ENCODE measurements at regions of chr1 and their contacts with region 1.

Region 1: DNA sequence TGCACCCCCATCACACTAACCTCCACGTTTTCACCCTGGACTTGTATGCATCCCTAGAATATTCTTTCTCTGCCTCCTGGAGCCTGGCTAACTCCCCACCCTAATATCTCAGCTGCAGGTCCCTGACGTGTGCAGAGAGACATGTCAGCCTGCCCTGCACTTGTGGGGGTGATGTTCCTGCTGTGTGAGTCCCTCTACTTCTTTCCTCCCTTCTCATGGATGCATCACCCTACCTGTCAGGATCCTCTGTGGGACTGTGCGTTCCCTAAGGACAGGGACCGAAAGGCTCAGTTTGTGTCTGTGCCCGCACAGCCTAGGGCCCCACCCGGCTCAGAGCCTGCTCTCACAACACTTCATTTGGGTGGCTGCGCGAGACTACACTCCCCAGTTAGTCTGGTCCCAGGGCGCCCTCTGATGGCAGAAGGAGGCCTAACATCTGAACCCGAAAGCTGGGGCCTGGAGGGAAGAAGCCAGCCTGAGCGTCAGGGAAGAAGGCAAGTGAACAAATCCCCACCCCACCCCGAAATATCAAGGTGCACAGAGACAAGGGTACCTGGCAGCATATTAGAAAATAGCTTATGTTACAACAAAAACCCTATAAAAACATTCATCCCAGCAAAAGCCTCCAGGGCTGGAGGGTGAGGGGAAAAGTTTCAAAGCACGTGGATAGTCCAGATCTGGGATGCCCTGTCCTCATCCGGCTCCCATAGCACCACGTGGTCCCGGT is 3.7 kb downstream of the CD52 start:
- DNase-seq: peak; percentile 93
- ATAC-seq: peak; percentile 66
- H3K4me3 ChIP-seq: peak overlapping the region in 4 of 5 experiments; percentile 90 to 95 (median 94)
- H3K4me3 Mint-ChIP-seq: peak overlapping the region; percentile 89
- H3K27ac ChIP-seq: peak overlapping the region in 1 of 2 donors; percentile 75
- H3K27ac Mint-ChIP-seq: peak overlapping the region; percentile 99
- H3K4me1 ChIP-seq: peaks cover 43% of the 10 kb centered on the region in 2 donors
- H3K4me1 Mint-ChIP-seq: peaks cover 57% of the 10 kb centered on the region
- H3K27me3 ChIP-seq: no peaks in the 10 kb centered on the region
- H3K27me3 Mint-ChIP-seq: no peaks in the 10 kb centered on the region
- CTCF ChIP-seq: peak; percentile 92

Region 2: DNA sequence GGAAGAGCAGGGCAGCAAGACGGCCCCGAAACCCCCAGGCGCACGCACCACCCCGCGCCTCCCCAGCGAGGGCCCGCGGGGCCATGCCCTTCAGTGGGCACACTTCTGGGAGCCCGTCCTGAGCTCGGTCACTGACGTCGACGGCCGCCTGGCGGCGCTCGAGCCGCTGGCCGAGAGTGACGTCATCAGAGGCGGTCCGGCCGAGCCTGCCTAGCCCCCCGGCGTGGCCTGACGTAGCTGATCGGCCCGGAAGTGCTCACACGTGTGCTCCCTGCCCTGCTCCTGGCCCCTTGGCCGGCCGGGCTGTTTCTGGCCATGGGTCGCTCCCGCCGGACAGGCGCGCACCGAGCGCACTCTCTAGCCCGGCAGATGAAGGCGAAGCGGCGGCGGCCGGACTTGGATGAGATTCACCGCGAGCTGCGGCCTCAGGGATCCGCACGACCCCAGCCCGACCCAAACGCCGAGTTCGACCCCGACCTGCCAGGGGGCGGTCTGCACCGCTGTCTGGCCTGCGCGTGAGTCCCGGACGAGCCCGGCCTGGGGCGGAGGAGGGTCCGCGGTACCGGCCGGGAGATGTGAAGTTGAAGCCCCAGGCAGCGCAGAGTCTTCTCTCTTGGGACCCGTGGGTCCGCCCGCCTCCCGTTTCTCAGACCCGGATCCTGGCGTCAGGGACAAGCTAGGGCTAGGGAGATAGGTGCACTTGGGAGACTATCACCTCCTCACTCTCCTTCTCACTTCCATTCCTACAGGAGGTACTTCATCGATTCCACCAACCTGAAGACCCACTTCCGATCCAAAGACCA is 151.6 kb before region 1 on chr1 and contains the start of gene ZNF593:
- CTCF ChIA-PET with region 1: interaction called, 19 read pairs
- POLR2A ChIA-PET with region 1: no interaction called
- intact Hi-C with region 1: loop called (anchors 1 kb)
- DNase-seq: peak; percentile 92
- ATAC-seq: peak; percentile 97
- H3K4me3 ChIP-seq: peak within 1 kb of the TSS; percentile 58 to 94 (median 86)
- H3K4me3 Mint-ChIP-seq: peak within 1 kb of the TSS; percentile 93
- H3K27ac ChIP-seq: peak within 1 kb of the TSS; percentile 38 to 91
- H3K27ac Mint-ChIP-seq: peak within 1 kb of the TSS; percentile 85
- H3K4me1 ChIP-seq: peaks cover 7 to 15% of the 10 kb centered on the region in 2 donors
- H3K4me1 Mint-ChIP-seq: peaks cover 15% of the 10 kb centered on the region
- H3K27me3 ChIP-seq: no peaks in the 10 kb centered on the region
- H3K27me3 Mint-ChIP-seq: no peaks in the 10 kb centered on the region
- CTCF ChIP-seq: peak; percentile 79
- total RNA-seq, gene ZNF593: 10.7 and 13.5 TPM in 2 replicates

Region 3: DNA sequence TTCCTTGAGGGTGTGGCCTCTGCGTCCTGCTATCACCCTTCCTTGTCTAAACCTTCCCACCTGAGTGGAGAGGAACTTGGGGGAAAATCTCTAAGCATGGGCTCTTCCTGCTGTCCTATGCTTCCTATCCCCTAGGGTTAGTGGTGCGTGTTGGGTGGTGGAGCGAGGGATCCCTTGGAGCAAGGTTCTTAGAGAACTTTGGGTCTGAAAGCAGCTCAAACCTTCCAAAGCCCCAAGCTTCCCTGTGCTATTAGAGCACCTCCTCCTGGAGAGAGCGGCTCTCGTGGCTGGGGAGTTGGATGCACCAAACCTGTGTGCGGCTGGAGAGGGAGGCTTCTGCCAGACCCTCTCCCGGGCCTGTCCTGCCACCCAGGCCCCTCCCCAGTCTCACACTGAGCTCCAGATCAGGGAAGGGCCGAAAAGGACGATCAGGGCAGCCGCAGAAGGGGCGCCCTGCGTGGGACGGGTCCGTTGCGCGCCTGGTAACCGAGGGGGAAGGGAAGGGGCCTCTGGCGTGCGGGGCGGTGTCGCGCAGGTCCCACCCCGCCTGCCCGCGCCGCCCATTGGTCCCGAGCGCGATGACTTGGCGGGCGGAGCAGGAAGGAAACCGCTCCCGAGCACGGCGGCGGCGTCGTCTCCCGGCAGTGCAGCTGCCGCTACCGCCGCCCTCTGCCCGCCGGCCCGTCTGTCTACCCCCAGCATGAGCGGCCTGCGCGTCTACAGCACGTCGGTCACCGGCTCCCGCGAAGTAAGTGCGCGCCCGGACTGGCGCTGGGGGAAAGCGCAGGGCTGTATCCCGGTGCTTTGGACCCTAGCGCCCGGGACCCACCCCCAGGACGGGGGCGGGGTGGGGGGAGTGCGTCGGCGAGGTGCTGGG is 41.8 kb before region 1 on chr1 and contains the start of gene SH3BGRL3:
- CTCF ChIA-PET with region 1: interaction called, 1,400 read pairs
- POLR2A ChIA-PET with region 1: interaction called, 1,239 read pairs
- intact Hi-C with region 1: loop called (anchors 1 kb)
- DNase-seq: peak; percentile 87
- ATAC-seq: peak; percentile 68
- H3K4me3 ChIP-seq: peak within 1 kb of the TSS; percentile 75 to 93 (median 90)
- H3K4me3 Mint-ChIP-seq: peak within 1 kb of the TSS; percentile 92
- H3K27ac ChIP-seq: peak within 1 kb of the TSS; percentile 73 to 81
- H3K27ac Mint-ChIP-seq: peak within 1 kb of the TSS; percentile 91
- H3K4me1 ChIP-seq: peaks cover 55 to 83% of the 10 kb centered on the region in 2 donors
- H3K4me1 Mint-ChIP-seq: peaks cover 74% of the 10 kb centered on the region
- H3K27me3 ChIP-seq: no peaks in the 10 kb centered on the region
- H3K27me3 Mint-ChIP-seq: no peaks in the 10 kb centered on the region
- CTCF ChIP-seq: no peak
- total RNA-seq, gene SH3BGRL3: 230 and 232 TPM in 2 replicates

Region 4: DNA sequence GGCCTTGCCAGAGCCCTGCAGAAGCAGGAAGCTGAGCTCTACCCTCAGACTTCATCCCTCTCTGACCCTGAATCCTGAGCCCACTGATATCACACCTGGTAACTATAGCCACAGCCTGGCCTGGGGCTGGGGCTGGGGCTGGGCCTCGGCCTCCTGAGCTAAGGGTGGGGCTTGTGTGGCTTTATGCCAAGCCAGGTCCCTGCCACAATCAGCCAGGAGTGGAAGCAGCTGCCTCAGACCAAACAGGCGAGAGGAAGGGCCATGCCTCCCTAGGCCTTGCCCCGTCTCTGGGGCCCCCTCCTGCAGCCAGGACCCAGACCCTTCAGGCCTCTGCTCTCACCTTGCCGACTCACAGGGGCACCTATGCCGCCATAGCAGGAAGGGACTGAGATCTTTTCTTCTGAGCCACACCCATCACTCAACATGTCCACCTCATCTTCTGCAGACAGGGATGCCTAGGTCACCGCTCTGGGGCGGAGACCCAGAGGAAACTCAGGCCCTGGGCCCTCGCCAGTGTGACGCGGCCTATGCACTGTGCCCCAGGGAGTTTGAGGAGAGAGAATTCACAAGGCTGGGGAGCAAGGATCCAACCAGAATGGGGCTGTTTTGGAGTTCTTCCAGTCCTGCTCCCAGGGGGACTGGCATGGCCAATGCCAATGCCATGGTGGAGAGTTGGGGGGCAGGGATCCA is 20.7 kb before region 1 on chr1:
- CTCF ChIA-PET with region 1: interaction called, 5 read pairs
- POLR2A ChIA-PET with region 1: interaction called, 47 read pairs
- intact Hi-C with region 1: no loop called
- DNase-seq: no peak
- ATAC-seq: no peak
- H3K4me3 ChIP-seq: no peak overlapping the region
- H3K4me3 Mint-ChIP-seq: no peak overlapping the region
- H3K27ac ChIP-seq: no peak overlapping the region
- H3K27ac Mint-ChIP-seq: peak overlapping the region; percentile 72
- H3K4me1 ChIP-seq: peaks cover 22 to 30% of the 10 kb centered on the region in 2 donors
- H3K4me1 Mint-ChIP-seq: peaks cover 34% of the 10 kb centered on the region
- H3K27me3 ChIP-seq: no peaks in the 10 kb centered on the region
- H3K27me3 Mint-ChIP-seq: no peaks in the 10 kb centered on the region
- CTCF ChIP-seq: no peak

Region 5: DNA sequence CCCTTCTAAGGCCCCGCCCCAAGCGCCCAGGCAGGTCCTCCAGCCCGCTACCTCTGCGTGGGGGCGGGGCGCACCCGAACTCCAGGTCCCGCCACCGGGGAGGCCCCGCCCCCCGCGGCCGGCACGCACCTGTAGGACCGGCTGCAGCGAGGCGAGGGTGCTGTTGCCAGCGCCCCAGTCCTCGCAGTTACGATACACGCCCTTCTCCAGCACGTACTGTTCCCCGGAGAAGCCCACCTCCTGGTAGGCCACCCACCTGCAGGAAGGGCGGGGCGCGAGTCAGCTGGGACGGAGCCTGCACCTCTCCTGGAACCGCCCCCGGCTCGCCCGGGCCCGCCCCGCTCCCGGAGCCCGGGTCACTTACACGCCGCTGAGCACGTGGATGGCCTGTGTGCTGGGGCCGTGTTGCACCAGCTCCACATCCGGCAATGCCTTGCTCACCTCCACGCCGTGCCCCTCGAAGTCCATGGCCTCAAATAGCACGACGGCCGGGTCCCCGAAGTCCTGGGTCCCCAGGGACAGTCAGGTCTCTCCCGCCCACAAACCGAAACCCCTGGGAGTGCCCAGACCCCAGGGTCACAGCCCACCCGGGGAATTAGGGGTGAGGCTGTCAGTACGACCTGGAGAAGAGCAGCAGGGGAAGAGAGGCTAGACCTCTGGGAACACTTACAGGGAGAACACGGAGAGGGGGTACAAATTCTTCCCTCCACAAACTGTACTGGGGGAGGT is 15.2 kb after region 1 on chr1:
- CTCF ChIA-PET with region 1: interaction called, 5 read pairs
- POLR2A ChIA-PET with region 1: interaction called, 4 read pairs
- intact Hi-C with region 1: loop called (anchors 1 kb)
- DNase-seq: peak; percentile 91
- ATAC-seq: peak; percentile 96
- H3K4me3 ChIP-seq: peak overlapping the region in 4 of 5 experiments; percentile 56 to 72 (median 65)
- H3K4me3 Mint-ChIP-seq: peak overlapping the region; percentile 95
- H3K27ac ChIP-seq: no peak overlapping the region
- H3K27ac Mint-ChIP-seq: peak overlapping the region; percentile 61
- H3K4me1 ChIP-seq: peaks cover 8 to 14% of the 10 kb centered on the region in 2 donors
- H3K4me1 Mint-ChIP-seq: peaks cover 13% of the 10 kb centered on the region
- H3K27me3 ChIP-seq: no peaks in the 10 kb centered on the region
- H3K27me3 Mint-ChIP-seq: no peaks in the 10 kb centered on the region
- CTCF ChIP-seq: no peak

Region 6: DNA sequence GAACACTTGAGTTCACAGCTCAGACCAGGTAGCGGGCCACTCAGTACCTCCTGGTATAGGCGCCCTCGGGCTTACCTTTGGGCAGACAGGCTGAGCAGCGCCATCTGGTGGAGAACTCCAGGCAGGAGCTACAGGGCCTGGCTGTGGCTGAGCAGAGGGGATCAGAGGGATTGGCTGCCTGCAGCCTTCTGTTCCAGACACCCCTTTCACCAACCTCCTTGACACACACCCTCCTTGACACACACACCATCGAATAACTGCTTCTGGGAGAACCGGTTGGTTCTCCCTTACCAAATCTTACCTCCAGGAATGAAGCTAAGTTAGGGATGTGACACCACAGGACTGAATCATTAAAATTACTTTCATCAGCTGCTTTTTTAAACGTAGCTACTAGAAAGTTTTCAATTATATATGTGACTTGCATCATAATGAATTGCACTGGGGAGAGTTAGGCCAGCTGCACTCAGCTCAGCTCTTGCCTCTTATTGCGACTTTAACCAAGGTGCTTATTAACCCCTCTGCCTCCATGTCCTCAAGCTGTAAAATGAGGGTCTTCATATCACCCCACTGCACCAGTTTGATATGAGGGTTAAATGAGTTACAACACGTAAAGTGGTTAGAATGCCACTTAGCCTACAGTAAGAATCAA is 95.8 kb after region 1 on chr1:
- CTCF ChIA-PET with region 1: interaction called, 19 read pairs
- POLR2A ChIA-PET with region 1: interaction called, 4 read pairs
- intact Hi-C with region 1: no loop called
- DNase-seq: peak; percentile 85
- ATAC-seq: peak; percentile 99
- H3K4me3 ChIP-seq: no peak overlapping the region
- H3K4me3 Mint-ChIP-seq: no peak overlapping the region
- H3K27ac ChIP-seq: no peak overlapping the region
- H3K27ac Mint-ChIP-seq: no peak overlapping the region
- H3K4me1 ChIP-seq: no peaks in the 10 kb centered on the region
- H3K4me1 Mint-ChIP-seq: no peaks in the 10 kb centered on the region
- H3K27me3 ChIP-seq: peaks cover 0 to 22% (median 19%) of the 10 kb centered on the region in 4 experiments
- H3K27me3 Mint-ChIP-seq: peaks cover 40% of the 10 kb centered on the region
- CTCF ChIP-seq: peak; percentile 90

Region 7: GRCh38 chr1:26472901-26473845 is 151.7 kb after region 1 on chr1:
- CTCF ChIA-PET with region 1: no interaction called
- POLR2A ChIA-PET with region 1: interaction called, 4 read pairs
- intact Hi-C with region 1: loop called (anchors 5 kb)
- DNase-seq: peak; percentile 98
- ATAC-seq: peak; percentile 79
- H3K4me3 ChIP-seq: peak overlapping the region; percentile 72 to 91 (median 80)
- H3K4me3 Mint-ChIP-seq: peak overlapping the region; percentile 90
- H3K27ac ChIP-seq: peak overlapping the region; percentile 95 to 98
- H3K27ac Mint-ChIP-seq: peak overlapping the region; percentile 90
- H3K4me1 ChIP-seq: peaks cover 35% of the 10 kb centered on the region in 2 donors
- H3K4me1 Mint-ChIP-seq: peaks cover 58% of the 10 kb centered on the region
- H3K27me3 ChIP-seq: no peaks in the 10 kb centered on the region
- H3K27me3 Mint-ChIP-seq: no peaks in the 10 kb centered on the region
- CTCF ChIP-seq: no peak